ENCODE measurements at regions of chr5 and their contacts with region 1.

Region 1: GRCh38 chr5:16456103-16456832 is 9.3 kb downstream of the ZNF622 start:
- DNase-seq: no peak
- H3K4me3 ChIP-seq: no peak overlapping the region
- H3K27ac ChIP-seq: peak overlapping the region; percentile 84
- H3K4me1 ChIP-seq: peaks cover 89% of the 10 kb centered on the region
- H3K27me3 ChIP-seq: no peaks in the 10 kb centered on the region
- CTCF ChIP-seq: peak; percentile 75

Region 2: DNA sequence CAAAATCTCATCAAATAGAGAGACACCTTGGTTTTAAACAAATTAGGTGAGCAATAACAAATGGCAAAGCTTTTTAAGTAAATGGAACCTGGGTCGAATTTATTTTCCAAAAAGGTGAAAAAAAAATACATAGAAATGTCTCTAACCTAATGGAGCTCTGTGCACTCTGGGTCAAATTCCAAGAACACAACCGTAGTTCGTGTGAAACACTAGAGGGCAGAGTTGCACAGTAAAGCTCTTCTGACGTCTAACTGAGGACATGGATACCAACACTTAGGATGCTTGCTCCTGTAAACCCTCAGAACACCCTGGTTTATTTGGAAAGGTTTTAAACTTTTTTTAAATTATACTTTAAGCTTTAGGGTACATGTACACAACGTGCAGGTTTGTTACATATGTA is 295.6 kb before region 1 on chr5:
- intact Hi-C with region 1: loop called (anchors 10 kb)
- DNase-seq: no peak
- H3K4me3 ChIP-seq: no peak overlapping the region
- H3K27ac ChIP-seq: no peak overlapping the region
- H3K4me1 ChIP-seq: peaks cover under 1% of the 10 kb centered on the region
- H3K27me3 ChIP-seq: no peaks in the 10 kb centered on the region
- CTCF ChIP-seq: peak; percentile 73

Region 3: GRCh38 chr5:16502866-16503265 is 46.6 kb after region 1 on chr5:
- intact Hi-C with region 1: no loop called
- DNase-seq: no peak
- H3K4me3 ChIP-seq: peak overlapping the region; percentile 65
- H3K27ac ChIP-seq: peak overlapping the region; percentile 85
- H3K4me1 ChIP-seq: peaks cover 64% of the 10 kb centered on the region
- H3K27me3 ChIP-seq: no peaks in the 10 kb centered on the region
- CTCF ChIP-seq: no peak

Measured in left ventricle myocardium inferior (tissue), 1 donor.